PC-3 (cell line): ENCODE measurements at regions of chr18 and their contacts with region 1.

Region 1: GRCh38 chr18:39994498-39994897 is 1960.5 kb upstream of the PIK3C3 start:
- DNase-seq: peak; percentile 50
- ATAC-seq: no peak
- H3K4me3 ChIP-seq: no peak overlapping the region
- H3K27ac ChIP-seq: no peak overlapping the region
- H3K4me1 ChIP-seq: no peaks in the 10 kb centered on the region; the same call in 1 of the 2 replicates
- H3K27me3 ChIP-seq: no peaks in the 10 kb centered on the region
- CTCF ChIP-seq: no peak

Region 2: DNA sequence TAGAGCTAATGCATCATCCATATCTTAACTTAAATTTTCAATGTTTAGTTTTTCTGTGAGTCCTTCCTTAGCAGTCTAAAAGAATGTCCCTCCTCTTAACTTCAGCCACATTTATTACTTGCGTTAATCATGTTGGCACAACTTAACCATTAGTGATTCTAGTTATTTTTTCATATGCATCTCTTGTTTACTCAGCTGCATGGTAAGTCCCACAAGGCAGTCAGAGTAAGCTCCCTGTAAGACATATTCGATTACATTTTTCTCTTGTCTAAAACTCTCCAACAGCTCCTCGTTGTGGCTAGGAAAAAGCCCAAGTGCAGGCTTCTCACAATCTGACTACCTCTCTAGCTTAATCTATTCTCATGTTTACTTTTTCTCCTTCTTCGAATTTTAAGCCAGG is 84.8 kb before region 1 on chr18:
- CTCF ChIA-PET with region 1: no interaction called
- POLR2A ChIA-PET with region 1: no interaction called
- intact Hi-C with region 1: loop called (anchors 10 kb)
- DNase-seq: no peak
- ATAC-seq: no peak; the same call in 1 of the 2 replicates
- H3K4me3 ChIP-seq: no peak overlapping the region
- H3K27ac ChIP-seq: no peak overlapping the region
- H3K4me1 ChIP-seq: no peaks in the 10 kb centered on the region
- H3K27me3 ChIP-seq: no peaks in the 10 kb centered on the region
- CTCF ChIP-seq: no peak